HEK293T (cell line): ENCODE measurements at regions of chr4 and their contacts with region 1.

Region 1: GRCh38 chr4:40316782-40317635 is 18.1 kb upstream of the CHRNA9 start:
- DNase-seq: peak; percentile 52

Region 2: DNA sequence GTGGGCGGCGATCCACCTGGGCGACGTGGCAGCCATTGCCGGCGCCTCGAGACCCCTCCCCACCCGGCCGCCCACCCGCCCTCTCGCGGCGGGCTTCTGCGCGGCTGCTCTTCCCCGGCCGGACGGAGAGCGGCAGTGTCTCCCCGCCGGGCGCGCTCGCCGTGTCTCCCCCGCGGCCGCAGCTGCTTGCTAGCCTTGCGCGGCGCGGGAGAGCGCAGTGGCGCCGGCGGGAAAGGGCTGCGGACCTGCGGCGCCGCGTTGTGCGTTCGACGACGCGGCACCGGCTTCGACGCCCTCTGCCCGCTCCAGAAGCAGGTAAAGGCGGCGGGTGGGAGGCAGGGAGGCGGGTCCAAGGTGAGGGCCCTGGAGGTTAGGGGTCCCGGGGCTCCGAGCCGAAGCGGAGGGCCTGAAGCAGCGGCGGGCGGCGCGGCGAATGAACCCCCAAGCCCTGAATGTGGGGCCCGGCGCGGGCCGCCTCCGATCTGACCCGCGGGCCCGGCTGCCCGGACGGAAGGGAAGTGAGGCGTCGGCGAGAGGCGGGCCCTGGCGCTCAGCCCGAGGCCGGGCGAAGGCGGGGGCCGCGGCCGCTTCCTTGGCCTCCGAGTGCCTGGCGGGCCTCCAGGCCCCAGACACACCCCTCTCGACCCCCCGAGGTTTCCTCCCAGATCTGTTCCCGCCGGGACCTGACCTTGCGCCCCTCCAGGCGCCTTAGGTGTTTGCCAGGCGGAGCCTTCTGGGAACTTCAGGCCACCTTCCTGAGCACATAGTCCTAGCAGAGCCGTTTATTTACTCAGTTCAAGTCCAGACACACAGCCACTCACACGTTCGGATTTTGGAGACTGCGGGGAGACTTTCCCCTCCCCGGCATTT is 260.1 kb before region 1 on chr4 and contains the start of gene N4BP2:
- CTCF ChIA-PET with region 1: interaction called, 15 read pairs
- POLR2A ChIA-PET with region 1: interaction called, 8 read pairs
- DNase-seq: peak; percentile 60

Region 3: GRCh38 chr4:40118861-40119260 is 198.1 kb before region 1 on chr4:
- CTCF ChIA-PET with region 1: no interaction called
- POLR2A ChIA-PET with region 1: no interaction called
- DNase-seq: no peak

Region 4: GRCh38 chr4:40333921-40334352 is 16.9 kb after region 1 on chr4:
- CTCF ChIA-PET with region 1: interaction called, 6 read pairs
- POLR2A ChIA-PET with region 1: interaction called, 11 read pairs
- DNase-seq: peak; percentile 26

Region 5: GRCh38 chr4:40548296-40548695 is 231.3 kb after region 1 on chr4:
- CTCF ChIA-PET with region 1: no interaction called
- POLR2A ChIA-PET with region 1: no interaction called
- DNase-seq: no peak